A549 (cell line): ENCODE measurements at regions of chr12 and their contacts with region 1.

Region 1: GRCh38 chr12:69879041-69879960 is 54.3 kb downstream of the MYRFL start:
- DNase-seq: peak; percentile 69 to 76
- ATAC-seq: peak; percentile 93 to 98
- H3K4me3 ChIP-seq: peak overlapping the region; percentile 32
- H3K27ac ChIP-seq: no peak overlapping the region
- H3K4me1 ChIP-seq: 0 out of 3 replicates have a peak, but pooled peaks cover 4% of the 10 kb centered on the region
- CTCF ChIP-seq: peak; percentile 93
- EP300 ChIP-seq: no peak
- POLR2A ChIP-seq: no peak
- RAD21 ChIP-seq: peak; percentile 93 to 94

Region 2: DNA sequence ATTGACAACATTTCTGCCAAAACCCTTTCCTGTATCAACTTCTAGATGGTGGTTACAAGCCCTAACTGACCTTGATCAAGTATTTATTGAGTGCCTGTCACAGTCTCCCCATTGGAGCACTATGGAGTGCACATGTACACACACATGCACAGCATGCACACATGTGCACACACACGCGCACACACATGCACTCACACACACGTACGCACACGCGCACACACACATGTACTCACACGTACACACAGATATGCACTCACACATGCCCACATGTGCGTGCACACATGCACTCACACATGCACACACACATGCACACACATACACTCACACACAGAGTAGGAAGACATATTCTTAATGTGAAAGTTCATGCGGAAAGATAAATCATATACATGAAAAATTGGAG is 10.6 kb before region 1 on chr12:
- CTCF ChIA-PET with region 1: interaction called, 23 read pairs
- POLR2A ChIA-PET with region 1: no interaction called
- DNase-seq: no peak
- ATAC-seq: no peak
- H3K4me3 ChIP-seq: no peak overlapping the region
- H3K27ac ChIP-seq: no peak overlapping the region
- H3K4me1 ChIP-seq: no peaks in the 10 kb centered on the region
- CTCF ChIP-seq: no peak
- EP300 ChIP-seq: no peak
- POLR2A ChIP-seq: no peak; the same call in 1 of the 2 replicates
- RAD21 ChIP-seq: no peak

Region 3: DNA sequence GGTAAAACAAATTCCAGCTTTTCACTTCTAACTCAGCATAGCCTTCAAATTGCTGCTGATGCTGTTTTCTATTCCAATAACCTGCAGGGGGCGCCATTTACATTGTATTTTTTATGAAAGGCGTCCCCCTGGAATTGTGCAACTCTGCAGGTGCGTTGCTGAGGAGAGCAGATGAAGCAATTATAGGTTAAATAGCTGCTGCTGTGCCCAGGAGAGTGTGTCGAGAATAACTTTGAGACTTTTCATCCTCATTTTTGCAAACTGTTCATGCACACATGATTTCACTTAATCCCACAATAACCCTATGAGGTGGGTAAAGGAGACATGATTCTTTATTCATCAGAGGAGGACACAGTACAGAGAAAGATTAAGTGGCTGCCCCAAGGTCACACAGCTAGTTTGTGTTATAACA is 21.4 kb after region 1 on chr12:
- CTCF ChIA-PET with region 1: interaction called, 47 read pairs
- POLR2A ChIA-PET with region 1: no interaction called
- DNase-seq: peak; percentile 31 to 64
- ATAC-seq: peak; percentile 81 to 84; a peak in 5 of 6 replicates
- H3K4me3 ChIP-seq: no peak overlapping the region
- H3K27ac ChIP-seq: no peak overlapping the region
- H3K4me1 ChIP-seq: no peaks in the 10 kb centered on the region
- CTCF ChIP-seq: peak; percentile 92
- EP300 ChIP-seq: no peak
- POLR2A ChIP-seq: no peak
- RAD21 ChIP-seq: peak; percentile 92 to 94

Region 4: GRCh38 chr12:69906411-69907216 is 27.3 kb after region 1 on chr12:
- CTCF ChIA-PET with region 1: interaction called, 47 read pairs
- POLR2A ChIA-PET with region 1: no interaction called
- DNase-seq: no peak
- ATAC-seq: no peak
- H3K4me3 ChIP-seq: no peak overlapping the region
- H3K27ac ChIP-seq: no peak overlapping the region
- H3K4me1 ChIP-seq: no peaks in the 10 kb centered on the region
- CTCF ChIP-seq: no peak
- EP300 ChIP-seq: no peak
- POLR2A ChIP-seq: no peak
- RAD21 ChIP-seq: no peak

Region 5: GRCh38 chr12:70576346-70577282 is 697.3 kb after region 1 on chr12:
- CTCF ChIA-PET with region 1: interaction called, 57 read pairs
- POLR2A ChIA-PET with region 1: no interaction called
- DNase-seq: peak; percentile 51 to 75
- ATAC-seq: peak; percentile 93 to 98
- H3K4me3 ChIP-seq: no peak overlapping the region
- H3K27ac ChIP-seq: no peak overlapping the region
- H3K4me1 ChIP-seq: no peaks in the 10 kb centered on the region
- CTCF ChIP-seq: peak; percentile 90
- EP300 ChIP-seq: no peak
- POLR2A ChIP-seq: no peak
- RAD21 ChIP-seq: peak; percentile 93 to 96

Region 6: GRCh38 chr12:70719672-70720420 is 840.5 kb after region 1 on chr12:
- CTCF ChIA-PET with region 1: interaction called, 11 read pairs
- POLR2A ChIA-PET with region 1: no interaction called
- DNase-seq: peak in 1 of 2 experiments; percentile 13
- ATAC-seq: peak; percentile 70 to 90; a peak in 3 of 6 replicates
- H3K4me3 ChIP-seq: no peak overlapping the region
- H3K27ac ChIP-seq: no peak overlapping the region
- H3K4me1 ChIP-seq: no peaks in the 10 kb centered on the region
- CTCF ChIP-seq: peak; percentile 86
- EP300 ChIP-seq: no peak
- POLR2A ChIP-seq: no peak
- RAD21 ChIP-seq: peak; percentile 89 to 93

Region 7: DNA sequence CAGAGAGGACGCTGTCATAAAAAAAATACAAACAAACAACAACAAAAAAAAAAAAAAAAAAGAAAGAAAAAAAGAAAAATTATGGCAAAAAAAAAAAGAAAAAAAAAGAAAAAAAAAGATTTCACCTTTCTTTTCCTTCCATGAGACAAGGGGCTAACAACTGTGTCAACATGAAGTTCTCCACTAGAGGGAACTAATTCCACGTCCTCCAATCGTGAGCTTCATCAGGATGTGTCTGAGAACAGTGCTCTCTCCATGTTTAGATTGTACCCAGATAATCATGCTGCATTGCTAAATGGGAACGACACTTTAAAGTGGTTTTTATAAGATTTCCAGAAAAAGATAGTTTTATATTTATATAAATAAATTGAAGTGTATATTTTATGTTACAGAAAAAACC is 854.1 kb after region 1 on chr12:
- CTCF ChIA-PET with region 1: interaction called, 48 read pairs
- POLR2A ChIA-PET with region 1: no interaction called
- DNase-seq: peak; percentile 71 to 73
- ATAC-seq: peak; percentile 84 to 93; a peak in 4 of 6 replicates
- H3K4me3 ChIP-seq: no peak overlapping the region
- H3K27ac ChIP-seq: no peak overlapping the region
- H3K4me1 ChIP-seq: no peaks in the 10 kb centered on the region
- CTCF ChIP-seq: peak; percentile 80
- EP300 ChIP-seq: no peak
- POLR2A ChIP-seq: no peak
- RAD21 ChIP-seq: peak; percentile 77 to 86